CD8-positive, alpha-beta T cell (primary cell): ENCODE measurements at regions of chr20 and their contacts with region 1.

Region 1: DNA sequence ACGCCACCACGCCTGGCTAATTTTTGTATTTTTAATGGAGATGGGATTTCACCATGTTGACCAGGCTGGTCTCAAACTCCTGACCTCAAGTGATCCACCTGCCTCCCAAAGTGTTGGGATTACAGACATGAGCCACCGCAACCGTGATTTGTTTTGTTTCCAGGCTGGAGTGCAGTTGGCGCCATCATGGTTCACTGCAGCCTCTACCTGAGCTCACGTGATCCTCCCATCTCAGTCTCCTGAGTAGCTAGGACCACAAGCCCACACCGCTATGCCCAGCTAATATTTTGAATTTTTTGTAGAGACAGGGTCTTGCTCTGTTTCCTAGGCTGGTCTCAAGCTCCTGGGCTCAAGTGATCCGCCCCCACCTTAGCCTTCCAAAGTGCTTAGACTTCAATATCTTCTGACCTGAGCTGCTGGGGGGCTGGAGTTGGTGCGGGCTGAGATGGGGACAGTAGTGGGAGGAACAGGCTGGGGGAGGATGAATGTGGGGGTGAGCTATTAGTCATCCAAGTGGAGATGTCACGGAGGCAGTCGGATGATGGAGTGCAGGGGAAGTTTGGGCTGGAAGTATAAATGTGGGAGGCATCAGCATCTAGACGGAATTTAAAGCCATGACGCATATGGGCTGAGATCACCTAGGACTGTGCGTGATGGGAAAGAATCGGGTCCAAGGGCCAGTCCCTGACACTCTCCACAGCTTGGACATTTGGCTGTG is 23.1 kb upstream of the ZMYND8 start:
- DNase-seq: no peak
- ATAC-seq: no peak
- H3K4me3 ChIP-seq: no peak overlapping the region
- H3K4me3 Mint-ChIP-seq: no peak overlapping the region
- H3K27ac ChIP-seq: no peak overlapping the region
- H3K27ac Mint-ChIP-seq: no peak overlapping the region
- H3K4me1 ChIP-seq: peaks cover 10% of the 10 kb centered on the region
- H3K4me1 Mint-ChIP-seq: peaks cover 10% of the 10 kb centered on the region
- H3K27me3 ChIP-seq: no peaks in the 10 kb centered on the region
- H3K27me3 Mint-ChIP-seq: no peaks in the 10 kb centered on the region
- CTCF ChIP-seq: no peak

Region 2: GRCh38 chr20:47213966-47214365 is 165.6 kb before region 1 on chr20:
- CTCF ChIA-PET with region 1: interaction called, 44 read pairs
- POLR2A ChIA-PET with region 1: no interaction called
- intact Hi-C with region 1: no loop called
- DNase-seq: no peak
- ATAC-seq: no peak
- H3K4me3 ChIP-seq: no peak overlapping the region
- H3K4me3 Mint-ChIP-seq: no peak overlapping the region
- H3K27ac ChIP-seq: no peak overlapping the region
- H3K27ac Mint-ChIP-seq: no peak overlapping the region
- H3K4me1 ChIP-seq: no peaks in the 10 kb centered on the region
- H3K4me1 Mint-ChIP-seq: no peaks in the 10 kb centered on the region
- H3K27me3 ChIP-seq: no peaks in the 10 kb centered on the region
- H3K27me3 Mint-ChIP-seq: no peaks in the 10 kb centered on the region
- CTCF ChIP-seq: no peak

Region 3: DNA sequence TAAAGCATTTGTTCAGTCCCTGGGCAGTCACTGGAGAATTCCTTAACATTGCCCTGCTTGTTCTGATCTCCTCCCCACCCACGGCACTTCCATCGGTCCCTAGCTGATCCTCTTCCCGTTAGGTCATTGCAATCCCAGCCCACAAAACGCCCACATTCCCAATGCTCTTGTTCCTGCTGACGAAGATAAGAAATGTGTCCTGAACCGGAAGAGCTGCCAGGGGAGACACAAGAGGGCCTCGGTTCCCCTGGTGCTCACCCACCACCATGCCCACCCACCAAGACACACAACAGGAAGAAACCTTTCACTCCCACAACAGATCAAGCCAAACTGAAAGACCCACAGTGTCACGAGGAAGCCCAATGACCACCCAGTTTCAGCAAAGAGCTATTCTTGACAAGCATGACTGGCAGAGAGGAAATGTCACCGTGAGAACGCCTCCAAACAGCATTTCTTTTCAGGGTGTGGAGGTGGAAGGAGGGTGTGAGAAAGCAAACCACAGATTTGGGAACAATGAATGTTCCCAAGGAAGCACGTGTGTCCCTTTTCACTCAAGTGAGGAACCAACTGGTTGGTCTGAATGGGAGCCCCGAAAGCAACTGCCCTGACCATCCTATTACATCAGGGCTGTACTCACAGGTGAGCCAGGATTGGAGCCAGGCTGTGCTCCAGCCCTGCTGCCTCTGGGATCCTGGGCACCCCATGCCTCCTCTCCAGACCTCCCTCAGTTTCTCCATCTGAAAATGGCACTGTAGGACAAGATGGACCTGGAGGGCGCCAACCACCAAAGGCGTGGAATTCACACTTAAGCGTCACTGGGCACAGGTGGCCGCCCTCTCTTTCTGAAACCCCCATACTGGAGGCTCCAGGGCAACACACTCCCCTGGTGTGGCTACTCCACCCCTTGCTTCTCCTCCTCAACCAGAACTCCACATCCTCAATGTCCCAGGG is 120.6 kb before region 1 on chr20:
- CTCF ChIA-PET with region 1: interaction called, 40 read pairs
- POLR2A ChIA-PET with region 1: no interaction called
- intact Hi-C with region 1: no loop called
- DNase-seq: no peak
- ATAC-seq: no peak
- H3K4me3 ChIP-seq: no peak overlapping the region
- H3K4me3 Mint-ChIP-seq: no peak overlapping the region
- H3K27ac ChIP-seq: no peak overlapping the region
- H3K27ac Mint-ChIP-seq: peak overlapping the region; percentile 80
- H3K4me1 ChIP-seq: no peaks in the 10 kb centered on the region
- H3K4me1 Mint-ChIP-seq: peaks cover 19% of the 10 kb centered on the region
- H3K27me3 ChIP-seq: no peaks in the 10 kb centered on the region
- H3K27me3 Mint-ChIP-seq: no peaks in the 10 kb centered on the region
- CTCF ChIP-seq: no peak

Region 4: GRCh38 chr20:47304287-47304686 is 75.3 kb before region 1 on chr20:
- CTCF ChIA-PET with region 1: interaction called, 58 read pairs
- POLR2A ChIA-PET with region 1: no interaction called
- intact Hi-C with region 1: no loop called
- DNase-seq: no peak
- ATAC-seq: no peak
- H3K4me3 ChIP-seq: no peak overlapping the region
- H3K4me3 Mint-ChIP-seq: no peak overlapping the region
- H3K27ac ChIP-seq: no peak overlapping the region
- H3K27ac Mint-ChIP-seq: peak overlapping the region; percentile 8
- H3K4me1 ChIP-seq: peaks cover 6% of the 10 kb centered on the region
- H3K4me1 Mint-ChIP-seq: peaks cover 22% of the 10 kb centered on the region
- H3K27me3 ChIP-seq: no peaks in the 10 kb centered on the region
- H3K27me3 Mint-ChIP-seq: no peaks in the 10 kb centered on the region
- CTCF ChIP-seq: no peak

Region 5: GRCh38 chr20:47356526-47357295 is 22.9 kb before region 1 on chr20 and contains the start of gene ZMYND8:
- CTCF ChIA-PET with region 1: interaction called, 87 read pairs
- POLR2A ChIA-PET with region 1: interaction called, 8 read pairs
- intact Hi-C with region 1: no loop called
- DNase-seq: peak; percentile 90 to 100 (median 95)
- ATAC-seq: peak; percentile 90
- H3K4me3 ChIP-seq: peak within 1 kb of the TSS; percentile 53 to 55
- H3K4me3 Mint-ChIP-seq: peak within 1 kb of the TSS; percentile 82
- H3K27ac ChIP-seq: peak within 1 kb of the TSS; percentile 75 to 76
- H3K27ac Mint-ChIP-seq: peak within 1 kb of the TSS; percentile 100
- H3K4me1 ChIP-seq: peaks cover 70% of the 10 kb centered on the region
- H3K4me1 Mint-ChIP-seq: peaks cover 38% of the 10 kb centered on the region
- H3K27me3 ChIP-seq: no peaks in the 10 kb centered on the region
- H3K27me3 Mint-ChIP-seq: no peaks in the 10 kb centered on the region
- CTCF ChIP-seq: no peak
- total RNA-seq, gene ZMYND8: 23.2 to 27.0 TPM

Region 6: GRCh38 chr20:47411161-47411560 is 31.6 kb after region 1 on chr20:
- CTCF ChIA-PET with region 1: interaction called, 12 read pairs
- POLR2A ChIA-PET with region 1: no interaction called
- intact Hi-C with region 1: no loop called
- DNase-seq: no peak
- ATAC-seq: no peak
- H3K4me3 ChIP-seq: no peak overlapping the region
- H3K4me3 Mint-ChIP-seq: no peak overlapping the region
- H3K27ac ChIP-seq: no peak overlapping the region
- H3K27ac Mint-ChIP-seq: no peak overlapping the region
- H3K4me1 ChIP-seq: peaks cover 20% of the 10 kb centered on the region
- H3K4me1 Mint-ChIP-seq: peaks cover 20% of the 10 kb centered on the region
- H3K27me3 ChIP-seq: no peaks in the 10 kb centered on the region
- H3K27me3 Mint-ChIP-seq: no peaks in the 10 kb centered on the region
- CTCF ChIP-seq: no peak

Region 7: GRCh38 chr20:47762674-47763496 is 383.3 kb after region 1 on chr20:
- CTCF ChIA-PET with region 1: no interaction called
- POLR2A ChIA-PET with region 1: no interaction called
- intact Hi-C with region 1: no loop called
- DNase-seq: no peak
- ATAC-seq: no peak
- H3K4me3 ChIP-seq: no peak overlapping the region
- H3K4me3 Mint-ChIP-seq: no peak overlapping the region
- H3K27ac ChIP-seq: no peak overlapping the region
- H3K27ac Mint-ChIP-seq: no peak overlapping the region
- H3K4me1 ChIP-seq: no peaks in the 10 kb centered on the region
- H3K4me1 Mint-ChIP-seq: no peaks in the 10 kb centered on the region
- H3K27me3 ChIP-seq: peaks cover 0 to 2% of the 10 kb centered on the region in 2 experiments
- H3K27me3 Mint-ChIP-seq: peaks cover 24% of the 10 kb centered on the region
- CTCF ChIP-seq: no peak